Activated naive CD4-positive, alpha-beta T cell treated with anti-CD3 and anti-CD28 coated beads for 36 hours (primary cell): ENCODE measurements at regions of chr6 and their contacts with region 1.

Region 1: GRCh38 chr6:11445146-11445545 is 92.4 kb upstream of the TMEM170B start:
- DNase-seq: no peak
- H3K4me3 Mint-ChIP-seq: no peak overlapping the region
- H3K27ac Mint-ChIP-seq: no peak overlapping the region
- H3K4me1 Mint-ChIP-seq: peaks cover 53% of the 10 kb centered on the region
- H3K27me3 Mint-ChIP-seq: no peaks in the 10 kb centered on the region

Region 2: DNA sequence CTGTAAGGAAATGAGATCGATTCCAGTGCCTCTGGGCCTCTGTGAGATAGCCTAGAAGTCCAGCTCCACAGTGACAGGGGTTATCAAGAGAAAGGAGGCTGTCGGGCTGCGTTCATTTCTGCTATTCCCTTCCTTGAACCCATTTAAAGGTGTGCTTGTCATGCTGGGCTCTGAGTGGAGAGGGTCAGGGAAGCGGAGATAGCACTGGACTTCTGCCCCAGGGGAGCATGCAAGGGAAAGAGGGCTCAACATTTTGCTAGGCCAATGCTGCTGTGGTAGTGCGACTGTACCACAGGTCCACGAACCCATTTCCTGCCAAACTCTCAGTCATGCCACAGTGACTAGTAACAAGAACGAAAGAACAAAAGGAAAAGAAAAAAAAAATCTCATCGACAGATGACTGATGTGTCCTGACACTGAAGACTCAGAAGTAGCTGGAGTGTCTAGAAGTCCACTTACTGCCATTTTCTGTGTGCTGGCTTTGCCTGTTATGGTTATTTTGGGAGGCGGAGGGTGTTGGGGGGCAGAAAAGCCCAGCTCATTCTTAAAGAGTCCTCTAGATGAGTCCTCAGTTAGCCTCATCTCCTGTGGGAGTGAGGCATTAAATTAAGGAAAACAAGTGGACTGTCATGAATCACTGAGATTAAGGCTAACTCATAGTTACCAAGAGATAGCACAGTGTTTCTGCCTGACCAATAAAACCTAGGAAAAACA is 220.7 kb before region 1 on chr6:
- CTCF ChIA-PET with region 1: no interaction called
- intact Hi-C with region 1: no loop called
- DNase-seq: peak; percentile 63
- H3K4me3 Mint-ChIP-seq: no peak overlapping the region
- H3K27ac Mint-ChIP-seq: peak overlapping the region; percentile 46
- H3K4me1 Mint-ChIP-seq: peaks cover 28% of the 10 kb centered on the region
- H3K27me3 Mint-ChIP-seq: no peaks in the 10 kb centered on the region

Region 3: DNA sequence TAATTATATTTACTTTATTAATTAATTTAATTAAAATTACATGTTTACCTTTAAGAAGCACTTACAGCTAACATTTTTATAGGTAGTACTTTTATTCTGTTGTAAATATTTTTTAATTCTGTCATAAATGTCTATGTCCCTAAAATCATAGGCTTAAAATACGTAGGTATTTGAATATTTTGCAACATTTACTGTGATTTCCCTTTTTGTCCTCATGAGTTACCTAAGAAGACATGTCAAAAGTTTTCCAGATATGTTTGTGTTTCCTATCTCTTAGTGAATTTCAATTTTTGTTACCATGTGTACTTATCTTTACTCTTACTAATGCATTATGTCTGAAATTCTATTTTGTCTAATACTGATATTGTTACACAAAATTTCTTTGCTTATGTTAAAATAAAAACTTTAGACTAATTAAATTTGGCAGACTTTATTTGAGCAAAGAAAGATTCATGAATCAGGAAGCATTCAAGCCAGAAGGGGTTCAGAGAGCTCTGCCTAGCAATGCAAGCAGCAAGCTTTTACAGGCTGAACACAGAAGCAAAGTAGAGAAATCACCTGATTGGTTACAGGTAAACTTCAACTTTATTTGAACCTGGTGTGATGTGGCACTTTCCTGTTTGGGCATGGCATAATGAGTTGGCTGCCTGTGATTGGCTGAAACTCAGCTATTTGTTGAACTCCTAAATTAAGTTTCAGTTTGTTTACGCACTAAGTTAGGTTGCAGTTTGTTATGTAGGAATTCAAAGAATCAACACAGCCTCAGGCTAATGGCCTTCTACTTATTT is 30.8 kb before region 1 on chr6:
- CTCF ChIA-PET with region 1: no interaction called
- intact Hi-C with region 1: loop called (anchors 1 kb)
- DNase-seq: peak; percentile 60
- H3K4me3 Mint-ChIP-seq: no peak overlapping the region
- H3K27ac Mint-ChIP-seq: no peak overlapping the region
- H3K4me1 Mint-ChIP-seq: peaks cover 33% of the 10 kb centered on the region
- H3K27me3 Mint-ChIP-seq: no peaks in the 10 kb centered on the region

Region 4: GRCh38 chr6:11428895-11429294 is 16.3 kb before region 1 on chr6:
- CTCF ChIA-PET with region 1: no interaction called
- intact Hi-C with region 1: loop called (anchors 1 kb)
- DNase-seq: no peak
- H3K4me3 Mint-ChIP-seq: no peak overlapping the region
- H3K27ac Mint-ChIP-seq: no peak overlapping the region
- H3K4me1 Mint-ChIP-seq: peaks cover 35% of the 10 kb centered on the region
- H3K27me3 Mint-ChIP-seq: no peaks in the 10 kb centered on the region

Region 5: DNA sequence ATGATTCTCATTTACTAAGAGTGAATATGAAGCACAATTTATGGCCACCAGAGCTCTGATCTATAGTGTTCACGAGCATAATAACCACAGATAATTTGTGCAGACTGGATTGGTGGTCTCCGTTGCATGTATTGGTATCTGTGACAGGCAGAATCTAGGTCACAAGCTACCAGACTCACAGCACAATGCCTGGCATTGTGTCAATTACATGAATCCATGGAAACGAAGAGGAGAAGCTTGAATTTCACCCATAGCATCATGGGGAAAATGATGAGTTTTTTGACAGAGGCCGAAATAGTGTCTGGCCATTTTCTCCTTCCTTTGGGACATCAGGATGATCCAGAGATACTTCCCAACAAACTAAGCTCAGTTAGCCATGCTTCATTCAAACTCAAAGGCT is 40.1 kb after region 1 on chr6:
- CTCF ChIA-PET with region 1: no interaction called
- intact Hi-C with region 1: no loop called
- DNase-seq: no peak
- H3K4me3 Mint-ChIP-seq: no peak overlapping the region
- H3K27ac Mint-ChIP-seq: no peak overlapping the region
- H3K4me1 Mint-ChIP-seq: no peaks in the 10 kb centered on the region
- H3K27me3 Mint-ChIP-seq: no peaks in the 10 kb centered on the region

Region 6: DNA sequence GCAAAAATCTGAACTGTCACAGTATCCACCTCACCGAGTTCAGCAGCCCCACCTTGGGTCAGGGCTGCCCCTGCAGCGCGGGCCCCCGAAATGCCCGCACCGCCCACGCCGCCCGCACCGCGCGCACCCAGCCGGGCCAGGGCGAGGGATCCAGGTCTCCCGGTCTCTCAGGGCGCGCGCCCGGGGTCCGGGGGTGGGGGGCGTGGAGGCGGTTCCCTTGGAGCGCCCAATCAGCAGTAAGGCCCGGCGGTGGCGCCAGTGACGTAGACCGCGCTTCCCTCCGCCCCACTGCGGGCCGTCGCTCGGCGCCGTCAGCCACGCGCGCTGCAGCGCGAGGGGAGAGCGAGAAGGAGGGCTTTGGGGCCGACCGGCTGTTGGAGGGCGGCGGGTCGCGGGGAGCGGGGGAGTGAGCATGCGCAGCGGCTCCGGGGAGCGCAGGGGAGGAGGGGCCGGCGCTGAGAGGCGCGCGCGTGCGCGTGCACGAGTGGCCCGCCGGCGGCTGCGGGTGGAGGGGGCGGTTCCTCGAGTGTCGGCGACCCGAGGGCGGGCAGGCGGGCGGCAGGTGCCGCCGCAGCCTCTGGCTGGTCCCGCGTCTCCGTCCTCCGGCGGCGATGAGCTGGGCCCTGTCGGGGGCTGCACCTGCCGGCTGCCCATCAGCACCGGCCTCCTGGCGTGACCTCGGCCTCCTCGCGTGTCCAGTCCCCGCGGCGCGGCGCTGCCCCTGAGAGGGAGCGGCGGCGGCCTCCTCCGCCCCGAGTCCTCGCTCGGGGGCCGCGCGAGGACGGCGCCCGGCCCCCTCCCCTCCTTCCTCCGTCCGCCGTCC is 92.3 kb after region 1 on chr6 and contains the start of gene TMEM170B:
- CTCF ChIA-PET with region 1: no interaction called
- intact Hi-C with region 1: loop called (anchors 5 kb)
- DNase-seq: peak; percentile 84
- H3K4me3 Mint-ChIP-seq: peak within 1 kb of the TSS; percentile 78
- H3K27ac Mint-ChIP-seq: no peak within 1 kb of the TSS
- H3K4me1 Mint-ChIP-seq: peaks cover 9% of the 10 kb centered on the region
- H3K27me3 Mint-ChIP-seq: peaks cover 6% of the 10 kb centered on the region
- total RNA-seq, gene TMEM170B: 0.40 to 0.57 TPM